Panc1 (cell line): ENCODE measurements at regions of chr7 and their contacts with region 1.

Region 1: DNA sequence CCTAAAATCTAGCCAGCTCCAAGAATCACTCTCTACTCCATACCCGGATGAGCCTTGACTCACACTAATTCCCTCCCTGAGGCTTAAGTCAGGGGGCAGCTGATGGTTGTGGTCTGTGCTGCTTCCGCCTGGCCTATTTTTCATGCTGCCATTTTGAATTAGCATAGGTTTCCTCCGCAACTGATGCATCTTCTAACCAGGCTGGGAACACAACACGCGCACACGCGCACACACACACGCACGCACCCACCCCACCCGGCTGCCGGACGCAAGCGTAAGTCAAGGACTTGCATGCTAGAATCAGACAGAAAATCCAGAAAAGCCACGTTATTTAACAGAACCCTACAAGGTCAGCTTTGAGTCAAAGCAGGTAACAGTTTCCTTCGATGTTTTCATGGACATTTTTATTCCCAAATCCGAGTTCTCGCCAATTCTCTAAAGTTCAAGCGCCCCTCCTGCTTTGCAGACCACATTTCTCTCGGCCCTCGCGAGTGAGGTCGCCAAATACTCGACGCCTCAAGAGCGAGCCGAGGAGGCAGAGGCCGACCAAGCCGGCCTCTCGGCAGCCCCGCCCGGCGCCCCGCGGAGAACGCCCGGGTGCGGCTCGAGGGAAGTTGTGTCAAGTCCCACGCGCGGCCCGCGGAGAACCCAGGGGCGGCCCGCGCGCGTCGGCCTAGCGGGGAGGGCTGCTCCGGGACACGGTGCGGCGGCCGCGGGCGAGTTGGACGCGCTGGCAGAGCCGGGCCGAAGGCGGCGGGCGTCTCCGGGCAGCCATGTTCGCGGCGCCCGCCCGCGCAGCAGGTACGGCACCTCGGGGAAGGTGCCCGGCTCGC is 961 bp downstream of the SCRN1 start:
- DNase-seq: peak; percentile 76
- ATAC-seq: peak; percentile 63
- H3K4me3 ChIP-seq: peak overlapping the region; percentile 79 to 85
- H3K27ac ChIP-seq: peak overlapping the region; percentile 92
- H3K4me1 ChIP-seq: peaks cover 26% of the 10 kb centered on the region
- H3K27me3 ChIP-seq: no peaks in the 10 kb centered on the region
- CTCF ChIP-seq: no peak

Region 2: DNA sequence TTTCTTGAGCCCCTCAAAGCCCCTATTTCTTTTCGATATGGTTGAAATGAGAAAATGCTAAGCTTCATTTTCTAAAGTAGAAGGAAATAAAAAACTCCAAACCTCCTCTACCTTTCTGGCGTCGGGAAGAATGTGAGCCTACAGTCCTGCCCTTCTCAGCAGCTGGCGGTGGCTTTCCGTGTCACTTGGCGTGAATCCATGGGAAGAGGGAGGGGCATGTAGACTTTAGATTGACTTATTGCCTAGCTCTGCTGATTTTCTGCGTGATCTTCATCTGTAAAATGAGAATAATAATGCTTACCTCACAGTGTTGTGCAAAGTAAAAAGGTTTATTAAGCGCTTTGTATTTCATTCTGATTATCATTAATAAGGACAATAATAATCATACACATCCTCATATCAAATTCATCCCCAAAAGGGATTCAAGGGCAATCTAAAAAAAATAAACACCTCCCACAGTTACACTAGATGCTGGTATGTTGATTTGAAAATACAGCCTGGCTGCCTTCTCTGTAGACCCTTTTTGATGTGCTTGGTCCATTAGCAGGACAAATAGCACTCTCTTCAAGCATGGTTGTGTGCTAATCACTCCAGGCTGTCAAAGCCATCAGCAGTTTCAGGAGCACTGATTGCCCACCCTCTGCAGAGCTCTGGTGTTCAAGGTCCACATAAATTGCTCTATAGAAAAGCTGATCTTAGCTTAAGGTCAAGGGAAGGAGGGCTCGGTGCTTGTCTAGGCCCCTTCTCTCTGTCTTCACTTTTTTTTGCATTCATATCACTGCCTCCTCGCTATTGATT is 389.8 kb before region 1 on chr7:
- CTCF ChIA-PET with region 1: no interaction called
- POLR2A ChIA-PET with region 1: no interaction called
- in situ Hi-C with region 1: no loop called
- intact Hi-C with region 1: no loop called
- DNase-seq: no peak
- ATAC-seq: no peak
- H3K4me3 ChIP-seq: no peak overlapping the region
- H3K27ac ChIP-seq: no peak overlapping the region
- H3K4me1 ChIP-seq: no peaks in the 10 kb centered on the region
- H3K27me3 ChIP-seq: no peaks in the 10 kb centered on the region
- CTCF ChIP-seq: no peak

Region 3: GRCh38 chr7:30010021-30010420 is 21.4 kb after region 1 on chr7:
- CTCF ChIA-PET with region 1: no interaction called
- POLR2A ChIA-PET with region 1: interaction called, 10 read pairs
- in situ Hi-C with region 1: no loop called
- intact Hi-C with region 1: no loop called
- DNase-seq: no peak
- ATAC-seq: no peak
- H3K4me3 ChIP-seq: no peak overlapping the region
- H3K27ac ChIP-seq: no peak overlapping the region
- H3K4me1 ChIP-seq: no peaks in the 10 kb centered on the region
- H3K27me3 ChIP-seq: no peaks in the 10 kb centered on the region
- CTCF ChIP-seq: no peak

Region 4: GRCh38 chr7:30026229-30027064 is 37.8 kb after region 1 on chr7 and contains the start of gene FKBP14:
- CTCF ChIA-PET with region 1: no interaction called
- POLR2A ChIA-PET with region 1: no interaction called
- in situ Hi-C with region 1: no loop called
- intact Hi-C with region 1: loop called (anchors 1 kb)
- DNase-seq: peak; percentile 98
- ATAC-seq: peak; percentile 93
- H3K4me3 ChIP-seq: peak within 1 kb of the TSS; percentile 61 to 81
- H3K27ac ChIP-seq: peak within 1 kb of the TSS; percentile 90
- H3K4me1 ChIP-seq: peaks cover 30% of the 10 kb centered on the region
- H3K27me3 ChIP-seq: no peaks in the 10 kb centered on the region
- CTCF ChIP-seq: no peak
- total RNA-seq, gene FKBP14: 36.0 TPM

Region 5: DNA sequence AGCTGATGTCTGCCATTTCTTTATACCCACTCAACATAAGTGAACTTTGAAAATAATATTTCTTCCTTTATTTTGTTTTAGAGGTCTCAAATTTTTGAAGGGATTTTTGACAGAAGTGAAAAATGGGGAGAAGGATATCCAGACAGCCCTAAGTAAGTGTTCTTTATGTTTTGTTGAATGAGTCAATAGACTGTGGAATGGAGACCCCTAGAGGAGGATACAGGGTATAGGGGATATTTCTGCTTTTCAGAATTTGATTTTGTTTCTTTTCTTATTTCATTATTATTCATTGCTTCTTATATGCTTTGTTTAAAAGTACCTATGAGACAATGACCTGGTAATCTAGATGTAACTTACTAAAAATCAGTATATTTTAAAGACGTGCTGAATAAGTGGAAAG is 74.0 kb after region 1 on chr7:
- CTCF ChIA-PET with region 1: interaction called, 3 read pairs
- POLR2A ChIA-PET with region 1: no interaction called
- in situ Hi-C with region 1: no loop called
- intact Hi-C with region 1: loop called (anchors 5 kb)
- DNase-seq: peak; percentile 17
- ATAC-seq: peak; percentile 85
- H3K4me3 ChIP-seq: no peak overlapping the region
- H3K27ac ChIP-seq: no peak overlapping the region
- H3K4me1 ChIP-seq: no peaks in the 10 kb centered on the region
- H3K27me3 ChIP-seq: no peaks in the 10 kb centered on the region
- CTCF ChIP-seq: peak; percentile 44; the same call in 1 of the 2 replicates

Region 6: DNA sequence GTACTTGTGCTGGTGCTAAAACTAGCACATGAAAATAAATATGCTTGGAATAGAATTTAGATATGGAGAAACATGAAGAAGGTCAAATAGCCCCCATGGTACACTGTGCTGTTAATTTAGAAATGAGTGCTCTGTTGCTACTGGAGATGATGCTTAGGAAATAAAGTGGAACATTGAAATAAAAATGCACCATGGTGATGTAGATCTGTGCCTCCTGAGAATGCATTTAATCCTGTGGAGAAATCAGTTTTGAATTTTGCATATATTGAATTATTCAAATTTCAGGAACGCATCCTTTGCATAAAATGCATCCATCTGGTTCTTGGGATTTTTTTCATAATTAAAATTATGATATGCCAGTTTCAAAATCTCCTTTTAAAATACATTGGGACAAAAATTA is 84.1 kb after region 1 on chr7:
- CTCF ChIA-PET with region 1: no interaction called
- POLR2A ChIA-PET with region 1: no interaction called
- in situ Hi-C with region 1: no loop called
- intact Hi-C with region 1: no loop called
- DNase-seq: no peak
- ATAC-seq: no peak
- H3K4me3 ChIP-seq: no peak overlapping the region
- H3K27ac ChIP-seq: no peak overlapping the region
- H3K4me1 ChIP-seq: no peaks in the 10 kb centered on the region
- H3K27me3 ChIP-seq: no peaks in the 10 kb centered on the region
- CTCF ChIP-seq: no peak

Region 7: GRCh38 chr7:30548762-30549344 is 560.2 kb after region 1 on chr7:
- CTCF ChIA-PET with region 1: no interaction called
- POLR2A ChIA-PET with region 1: no interaction called
- in situ Hi-C with region 1: no loop called
- intact Hi-C with region 1: no loop called
- DNase-seq: peak; percentile 55
- ATAC-seq: peak; percentile 94
- H3K4me3 ChIP-seq: no peak overlapping the region
- H3K27ac ChIP-seq: no peak overlapping the region
- H3K4me1 ChIP-seq: peaks cover 3% of the 10 kb centered on the region; the same call in 1 of the 2 replicates
- H3K27me3 ChIP-seq: no peaks in the 10 kb centered on the region
- CTCF ChIP-seq: peak; percentile 96